CD8-positive, alpha-beta T cell (primary cell): ENCODE measurements at regions of chr17 and their contacts with region 1.

Region 1: DNA sequence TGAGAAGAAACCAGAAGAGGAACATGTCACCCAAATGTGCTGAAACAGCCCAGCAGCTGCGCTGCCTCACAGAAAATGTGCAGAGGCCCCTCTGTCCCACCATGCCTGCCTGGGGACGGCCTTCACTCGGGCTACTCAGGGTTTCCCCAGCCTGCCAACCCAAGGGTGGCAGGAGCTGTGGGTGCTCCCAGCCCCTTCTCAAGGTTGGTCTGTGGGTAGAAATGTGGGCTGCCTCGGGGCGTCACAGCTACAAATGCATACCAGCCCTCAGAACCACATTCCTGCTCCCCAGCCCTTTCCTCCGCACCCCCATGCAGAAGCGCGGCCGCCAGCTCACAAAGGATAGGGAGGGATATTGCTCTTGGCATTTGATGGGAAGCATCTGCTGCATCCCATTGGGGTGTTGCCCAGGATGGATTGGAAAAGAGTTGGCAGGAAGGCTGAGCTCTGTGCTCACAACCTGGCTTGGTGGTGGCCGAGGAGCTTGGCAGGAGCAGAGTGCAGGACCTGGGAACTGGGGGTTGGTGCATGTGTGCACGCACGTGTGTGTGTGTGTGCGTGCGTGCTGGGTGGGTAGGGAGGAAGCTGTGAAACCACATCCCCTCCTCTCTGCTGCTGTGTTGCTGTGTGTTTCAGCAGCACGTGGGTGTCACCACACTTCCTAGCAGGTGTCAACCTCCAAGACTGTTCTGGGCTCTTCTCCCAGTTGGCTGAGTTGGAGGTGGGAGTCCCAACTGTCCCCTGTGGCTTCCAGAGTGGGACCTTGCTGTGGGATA is 304.4 kb downstream of the SEC14L1 start:
- DNase-seq: peak; percentile 75 to 99 (median 85)
- ATAC-seq: peak; percentile 62
- H3K4me3 ChIP-seq: peak overlapping the region; percentile 32 to 38
- H3K4me3 Mint-ChIP-seq: peak overlapping the region; percentile 82
- H3K27ac ChIP-seq: peak overlapping the region; percentile 64 to 72
- H3K27ac Mint-ChIP-seq: peak overlapping the region; percentile 97
- H3K4me1 ChIP-seq: peaks cover 92% of the 10 kb centered on the region
- H3K4me1 Mint-ChIP-seq: peaks cover 90% of the 10 kb centered on the region
- H3K27me3 ChIP-seq: no peaks in the 10 kb centered on the region
- H3K27me3 Mint-ChIP-seq: no peaks in the 10 kb centered on the region
- CTCF ChIP-seq: no peak

Region 2: GRCh38 chr17:77382966-77383612 is 62.1 kb before region 1 on chr17:
- CTCF ChIA-PET with region 1: interaction called, 6 read pairs
- POLR2A ChIA-PET with region 1: interaction called, 16 read pairs
- intact Hi-C with region 1: no loop called
- DNase-seq: no peak
- ATAC-seq: no peak
- H3K4me3 ChIP-seq: peak overlapping the region; percentile 30 to 34
- H3K4me3 Mint-ChIP-seq: peak overlapping the region; percentile 75
- H3K27ac ChIP-seq: peak overlapping the region in 1 of 2 experiments; percentile 40
- H3K27ac Mint-ChIP-seq: peak overlapping the region; percentile 91
- H3K4me1 ChIP-seq: peaks cover 95% of the 10 kb centered on the region
- H3K4me1 Mint-ChIP-seq: peaks cover 89% of the 10 kb centered on the region
- H3K27me3 ChIP-seq: no peaks in the 10 kb centered on the region
- H3K27me3 Mint-ChIP-seq: no peaks in the 10 kb centered on the region
- CTCF ChIP-seq: no peak

Region 3: GRCh38 chr17:77420804-77421629 is 24.2 kb before region 1 on chr17:
- CTCF ChIA-PET with region 1: interaction called, 142 read pairs
- POLR2A ChIA-PET with region 1: interaction called, 82 read pairs
- intact Hi-C with region 1: no loop called
- DNase-seq: peak in 8 of 9 experiments; percentile 39 to 79 (median 70)
- ATAC-seq: peak; percentile 62
- H3K4me3 ChIP-seq: peak overlapping the region; percentile 12 to 28
- H3K4me3 Mint-ChIP-seq: peak overlapping the region; percentile 65
- H3K27ac ChIP-seq: peak overlapping the region; percentile 22 to 57
- H3K27ac Mint-ChIP-seq: peak overlapping the region; percentile 91
- H3K4me1 ChIP-seq: peaks cover 75% of the 10 kb centered on the region
- H3K4me1 Mint-ChIP-seq: peaks cover 67% of the 10 kb centered on the region
- H3K27me3 ChIP-seq: no peaks in the 10 kb centered on the region
- H3K27me3 Mint-ChIP-seq: no peaks in the 10 kb centered on the region
- CTCF ChIP-seq: no peak

Region 4: DNA sequence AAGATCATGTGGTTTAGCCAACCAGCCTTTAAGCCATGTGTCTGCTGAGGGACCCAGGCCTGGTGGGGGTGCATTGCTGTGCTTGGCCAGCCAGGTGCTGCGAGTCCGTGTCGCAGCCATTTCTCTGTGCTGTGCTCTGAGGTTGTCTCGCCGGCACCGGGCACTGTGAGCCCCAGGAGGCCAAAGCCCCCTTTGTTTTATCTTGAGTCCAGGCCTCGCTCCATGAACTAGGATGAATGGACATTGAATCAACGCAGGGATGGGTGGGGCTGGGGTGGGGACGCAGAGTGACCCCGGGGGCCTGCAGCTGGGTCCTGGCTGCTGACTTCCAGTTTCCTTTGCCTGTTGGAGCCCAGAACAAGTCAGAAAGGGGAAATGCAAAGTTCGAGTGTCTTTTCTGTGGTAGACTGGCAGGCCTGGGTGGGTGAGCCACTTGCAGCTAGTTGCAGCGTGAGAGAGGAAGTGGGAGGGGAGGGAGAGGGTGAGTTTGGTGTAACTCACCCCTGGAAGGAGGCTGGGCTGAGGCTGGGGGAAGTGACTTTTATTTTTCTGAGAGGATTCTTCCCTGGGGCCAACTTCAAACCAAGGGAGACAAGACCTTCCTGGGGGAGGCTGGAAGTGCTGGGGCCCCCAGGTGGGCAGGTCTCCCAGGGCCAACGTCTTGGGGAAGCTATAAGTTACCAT is 20.3 kb after region 1 on chr17:
- CTCF ChIA-PET with region 1: interaction called, 7 read pairs
- POLR2A ChIA-PET with region 1: interaction called, 242 read pairs
- intact Hi-C with region 1: loop called (anchors 1 kb)
- DNase-seq: peak; percentile 58 to 93 (median 82)
- ATAC-seq: peak; percentile 91
- H3K4me3 ChIP-seq: peak overlapping the region; percentile 29 to 51
- H3K4me3 Mint-ChIP-seq: peak overlapping the region; percentile 71
- H3K27ac ChIP-seq: peak overlapping the region; percentile 28 to 68
- H3K27ac Mint-ChIP-seq: peak overlapping the region; percentile 94
- H3K4me1 ChIP-seq: peaks cover 94% of the 10 kb centered on the region
- H3K4me1 Mint-ChIP-seq: peaks cover 87% of the 10 kb centered on the region
- H3K27me3 ChIP-seq: no peaks in the 10 kb centered on the region
- H3K27me3 Mint-ChIP-seq: no peaks in the 10 kb centered on the region
- CTCF ChIP-seq: no peak

Region 5: GRCh38 chr17:77471984-77472461 is 26.9 kb after region 1 on chr17:
- CTCF ChIA-PET with region 1: interaction called, 10 read pairs
- POLR2A ChIA-PET with region 1: interaction called, 21 read pairs
- intact Hi-C with region 1: no loop called
- DNase-seq: no peak
- ATAC-seq: no peak
- H3K4me3 ChIP-seq: peak overlapping the region; percentile 5 to 33
- H3K4me3 Mint-ChIP-seq: peak overlapping the region; percentile 75
- H3K27ac ChIP-seq: peak overlapping the region; percentile 11 to 62
- H3K27ac Mint-ChIP-seq: peak overlapping the region; percentile 99
- H3K4me1 ChIP-seq: peaks cover 100% of the 10 kb centered on the region
- H3K4me1 Mint-ChIP-seq: peaks cover 95% of the 10 kb centered on the region
- H3K27me3 ChIP-seq: no peaks in the 10 kb centered on the region
- H3K27me3 Mint-ChIP-seq: no peaks in the 10 kb centered on the region
- CTCF ChIP-seq: no peak